ENCODE measurements at regions of chr19 and their contacts with region 1.

Region 1: DNA sequence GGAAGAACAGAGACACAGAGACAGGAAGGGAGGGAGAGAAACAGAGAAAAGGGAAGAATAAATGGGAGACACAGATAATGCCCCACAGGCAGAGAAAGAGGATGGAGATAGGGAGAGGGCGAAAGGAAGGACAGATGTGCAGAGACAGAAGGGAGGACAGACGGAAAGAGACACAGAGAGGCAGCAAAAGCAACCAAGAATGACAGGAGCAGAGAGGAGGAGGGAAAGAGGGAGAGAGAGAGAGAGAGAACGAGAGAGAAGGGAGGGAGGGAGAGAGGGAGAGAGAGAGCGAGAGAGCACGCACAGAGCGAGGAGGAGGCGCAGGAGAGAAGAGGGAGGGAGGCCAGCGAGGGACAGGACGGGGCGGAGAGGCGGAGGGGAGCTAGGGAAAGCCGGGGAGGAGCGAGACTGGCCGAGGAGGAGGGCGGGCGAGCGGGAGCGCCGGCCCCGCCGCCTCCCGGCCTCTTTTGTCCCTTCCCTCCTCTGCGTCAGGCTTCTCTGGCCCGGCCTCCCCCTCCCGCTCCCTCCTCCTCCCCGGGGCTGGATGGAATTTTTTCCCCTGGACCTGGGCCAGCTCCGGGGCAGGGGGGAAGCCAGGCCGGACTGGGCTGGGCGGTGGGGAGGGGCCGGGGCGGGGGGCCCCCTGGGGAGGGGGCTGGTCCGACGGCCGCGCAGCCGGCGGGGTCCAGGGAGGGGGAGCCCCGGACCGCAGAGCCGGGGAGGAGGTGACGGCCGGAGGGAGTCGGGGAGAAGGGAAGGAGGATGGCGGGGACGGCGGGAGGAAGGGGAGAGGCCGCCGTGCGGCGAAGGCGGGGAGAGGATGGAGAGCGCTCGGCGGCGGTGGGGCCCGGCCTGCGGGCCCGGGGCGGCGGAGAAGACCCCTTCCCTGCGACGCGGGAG is 4.2 kb upstream of the SPACA6 start:
- DNase-seq: peak; percentile 92
- H3K4me3 ChIP-seq: peak overlapping the region; percentile 73 to 94 (median 91)
- H3K27ac ChIP-seq: peak overlapping the region; percentile 59
- H3K4me1 ChIP-seq: peaks cover 24% of the 10 kb centered on the region
- H3K27me3 ChIP-seq: no peaks in the 10 kb centered on the region
- CTCF ChIP-seq: peak in 1 of 2 donors; percentile 3
- POLR2A ChIP-seq: no peak

Region 2: DNA sequence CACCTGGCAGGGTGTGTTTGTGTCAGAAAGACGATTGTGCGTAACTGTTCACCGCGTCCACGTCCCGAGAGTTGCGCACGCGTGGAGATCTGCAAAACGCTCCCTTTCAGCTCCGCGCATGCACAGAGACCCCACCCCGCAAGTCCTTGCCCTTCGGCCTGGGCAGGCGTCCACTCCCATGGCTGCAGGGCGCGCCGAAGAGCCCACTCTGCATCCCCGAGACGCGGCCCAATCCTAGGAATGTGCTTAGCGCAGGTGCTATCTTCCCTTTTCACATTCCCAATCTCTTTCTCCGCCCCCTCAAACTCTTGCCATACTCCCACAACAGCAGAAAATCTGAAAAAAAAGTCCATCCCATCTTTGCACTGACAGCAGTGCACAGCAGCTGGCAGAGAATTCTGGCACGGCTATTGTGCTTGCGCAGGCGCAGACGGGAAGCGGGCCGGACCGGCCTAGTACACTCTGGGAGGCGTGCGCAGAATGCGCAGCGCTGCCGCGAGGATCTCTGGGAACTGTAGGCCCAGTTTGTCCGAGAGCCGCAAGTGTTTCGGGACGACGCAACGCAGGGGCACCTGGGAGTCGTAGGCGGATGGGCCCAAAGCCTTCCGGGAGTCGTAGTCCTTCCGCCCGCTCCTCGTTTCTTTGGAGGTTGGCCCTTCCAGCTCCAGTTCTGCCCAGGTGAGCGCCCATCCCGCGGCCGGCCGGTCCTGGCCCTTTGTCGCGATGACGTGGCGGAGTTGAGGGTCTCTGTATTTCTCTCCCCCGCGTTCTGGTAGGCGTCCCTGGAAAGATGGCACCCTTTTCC is 94.8 kb before region 1 on chr19:
- CTCF ChIA-PET with region 1: no interaction called
- POLR2A ChIA-PET with region 1: no interaction called
- dilution Hi-C with region 1: no loop called
- intact Hi-C with region 1: loop called (anchors 1 kb)
- DNase-seq: peak; percentile 97
- H3K4me3 ChIP-seq: peak overlapping the region; percentile 16 to 53 (median 51)
- H3K27ac ChIP-seq: no peak overlapping the region
- H3K4me1 ChIP-seq: peaks cover 6% of the 10 kb centered on the region
- H3K27me3 ChIP-seq: no peaks in the 10 kb centered on the region
- CTCF ChIP-seq: no peak
- POLR2A ChIP-seq: no peak

Region 3: DNA sequence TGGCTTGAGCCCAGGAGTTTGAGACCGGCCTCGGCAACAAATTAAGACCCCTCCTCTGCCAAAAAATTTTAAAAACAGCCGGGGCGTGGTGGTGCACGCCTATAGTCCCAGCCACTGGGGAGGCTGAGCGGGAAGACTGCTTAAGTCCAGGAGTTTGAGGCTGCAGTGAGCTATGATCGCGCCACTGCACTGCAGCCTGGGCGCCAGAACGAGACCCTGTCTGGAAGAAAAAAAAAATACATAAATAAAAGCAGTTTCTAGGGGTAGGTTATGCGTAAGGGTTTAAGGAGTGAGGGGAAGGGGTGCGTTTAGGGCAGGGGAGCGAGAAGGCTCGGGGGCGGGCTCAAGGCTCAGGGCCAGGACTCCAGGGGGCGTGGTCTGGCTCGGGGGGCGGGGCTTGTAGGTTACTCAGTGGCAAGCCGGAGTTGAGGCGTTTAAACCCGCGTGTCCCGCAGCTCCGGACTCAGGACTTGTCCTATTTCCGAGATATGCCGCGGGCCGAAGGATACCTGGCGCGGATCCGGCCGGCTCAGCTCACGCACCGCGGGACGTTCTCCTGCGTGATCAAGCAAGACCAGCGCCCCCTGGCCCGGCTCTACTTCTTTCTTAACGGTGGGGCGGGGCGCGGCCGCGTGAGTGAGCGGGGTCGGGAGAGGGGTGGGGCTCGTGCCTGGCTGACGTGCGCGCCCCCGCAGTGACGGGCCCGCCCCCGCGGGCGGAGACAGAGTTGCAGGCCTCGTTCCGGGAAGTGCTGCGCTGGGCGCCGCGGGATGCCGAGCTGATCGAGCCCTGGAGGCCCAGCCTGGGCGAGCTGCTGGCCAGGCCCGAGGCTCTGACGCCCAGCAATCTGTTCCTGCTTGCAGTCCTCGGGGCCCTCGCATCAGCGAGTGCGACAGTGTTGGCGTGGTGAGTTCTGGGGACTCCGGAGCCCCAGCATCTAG is 14.9 kb after region 1 on chr19:
- CTCF ChIA-PET with region 1: interaction called, 20 read pairs
- POLR2A ChIA-PET with region 1: interaction called, 7 read pairs
- dilution Hi-C with region 1: no loop called
- intact Hi-C with region 1: loop called (anchors 1 kb)
- DNase-seq: peak; percentile 95
- H3K4me3 ChIP-seq: peak overlapping the region in 2 of 3 experiments; percentile 9 to 41
- H3K27ac ChIP-seq: no peak overlapping the region
- H3K4me1 ChIP-seq: peaks cover 2% of the 10 kb centered on the region
- H3K27me3 ChIP-seq: no peaks in the 10 kb centered on the region
- CTCF ChIP-seq: peak; percentile 35 to 66
- POLR2A ChIP-seq: peak; percentile 81

Measured in endothelial cell of umbilical vein (primary cell).